Vagina (tissue), 2 donors: ENCODE measurements at regions of chr6 and their contacts with region 1.

Region 1: GRCh38 chr6:167742719-167743303 is 83.9 kb upstream of the AFDN start:
- DNase-seq: no peak
- H3K4me3 ChIP-seq: no peak overlapping the region
- H3K27ac ChIP-seq: no peak overlapping the region
- H3K4me1 ChIP-seq: peaks cover 12% of the 10 kb centered on the region
- H3K27me3 ChIP-seq: no peaks in the 10 kb centered on the region
- CTCF ChIP-seq: no peak
- POLR2A ChIP-seq: no peak

Region 2: GRCh38 chr6:167811442-167812087 is 68.8 kb after region 1 on chr6:
- intact Hi-C with region 1: no loop called
- DNase-seq: no peak
- H3K4me3 ChIP-seq: no peak overlapping the region
- H3K27ac ChIP-seq: no peak overlapping the region
- H3K4me1 ChIP-seq: no peaks in the 10 kb centered on the region
- H3K27me3 ChIP-seq: no peaks in the 10 kb centered on the region
- CTCF ChIP-seq: no peak
- POLR2A ChIP-seq: no peak

Region 3: DNA sequence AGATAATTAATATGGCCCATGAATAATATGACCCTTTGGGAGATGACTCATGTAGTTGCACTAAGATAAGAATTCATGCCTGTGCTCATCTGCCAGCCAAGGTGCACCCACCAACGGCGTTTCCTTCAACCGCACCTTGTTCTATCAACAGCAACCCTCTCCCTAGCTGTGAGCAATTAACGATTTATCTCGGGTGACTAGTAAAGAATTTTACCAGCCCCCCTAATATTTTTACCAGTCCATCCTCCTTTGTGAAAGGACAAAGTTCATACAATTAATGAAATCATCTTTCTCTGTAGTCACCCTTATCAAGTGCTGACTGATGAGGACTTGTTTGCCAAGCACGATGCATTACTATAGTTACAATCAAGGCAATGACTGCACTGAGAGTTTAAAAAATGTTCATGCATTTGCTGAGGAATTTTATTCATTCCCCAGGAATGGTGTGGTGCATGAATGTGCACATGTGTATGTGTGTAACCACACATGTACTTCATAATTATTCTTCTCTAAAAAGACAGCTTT is 816.8 kb after region 1 on chr6:
- intact Hi-C with region 1: loop called (anchors 5 kb)
- DNase-seq: no peak
- H3K4me3 ChIP-seq: no peak overlapping the region
- H3K27ac ChIP-seq: no peak overlapping the region
- H3K4me1 ChIP-seq: no peaks in the 10 kb centered on the region
- H3K27me3 ChIP-seq: no peaks in the 10 kb centered on the region
- CTCF ChIP-seq: no peak
- POLR2A ChIP-seq: no peak